Activated CD4-positive, alpha-beta memory T cell treated with anti-CD3 and anti-CD28 coated beads for 36 hours (primary cell): ENCODE measurements at regions of chr3 and their contacts with region 1.

Region 1: GRCh38 chr3:101803173-101803782 is 24.3 kb downstream of the NXPE3 start:
- DNase-seq: peak; percentile 53
- H3K4me3 Mint-ChIP-seq: no peak overlapping the region
- H3K27ac Mint-ChIP-seq: no peak overlapping the region
- H3K4me1 Mint-ChIP-seq: peaks cover 29% of the 10 kb centered on the region
- H3K27me3 Mint-ChIP-seq: no peaks in the 10 kb centered on the region

Region 2: DNA sequence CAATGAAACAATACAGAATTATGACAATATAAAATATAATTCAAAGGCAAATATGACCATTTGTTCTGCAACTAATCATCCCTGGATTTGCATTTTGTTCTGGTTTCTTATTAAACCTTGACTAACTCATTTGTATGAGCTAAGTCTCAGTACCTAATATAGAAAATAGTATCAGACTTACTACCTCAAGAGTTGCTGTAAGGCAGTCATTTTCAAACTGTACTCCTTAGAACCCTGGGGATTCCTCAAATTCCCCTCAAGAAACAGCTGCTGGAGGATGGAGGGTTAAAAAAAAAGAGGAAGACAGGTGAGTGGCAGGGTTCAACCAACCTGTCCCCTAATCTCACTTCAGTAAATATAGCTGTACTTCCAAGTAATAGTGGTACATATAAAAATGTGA is 137.4 kb before region 1 on chr3:
- CTCF ChIA-PET with region 1: no interaction called
- POLR2A ChIA-PET with region 1: no interaction called
- intact Hi-C with region 1: no loop called
- DNase-seq: no peak
- H3K4me3 Mint-ChIP-seq: no peak overlapping the region
- H3K27ac Mint-ChIP-seq: no peak overlapping the region
- H3K4me1 Mint-ChIP-seq: peaks cover 3% of the 10 kb centered on the region
- H3K27me3 Mint-ChIP-seq: no peaks in the 10 kb centered on the region

Region 3: DNA sequence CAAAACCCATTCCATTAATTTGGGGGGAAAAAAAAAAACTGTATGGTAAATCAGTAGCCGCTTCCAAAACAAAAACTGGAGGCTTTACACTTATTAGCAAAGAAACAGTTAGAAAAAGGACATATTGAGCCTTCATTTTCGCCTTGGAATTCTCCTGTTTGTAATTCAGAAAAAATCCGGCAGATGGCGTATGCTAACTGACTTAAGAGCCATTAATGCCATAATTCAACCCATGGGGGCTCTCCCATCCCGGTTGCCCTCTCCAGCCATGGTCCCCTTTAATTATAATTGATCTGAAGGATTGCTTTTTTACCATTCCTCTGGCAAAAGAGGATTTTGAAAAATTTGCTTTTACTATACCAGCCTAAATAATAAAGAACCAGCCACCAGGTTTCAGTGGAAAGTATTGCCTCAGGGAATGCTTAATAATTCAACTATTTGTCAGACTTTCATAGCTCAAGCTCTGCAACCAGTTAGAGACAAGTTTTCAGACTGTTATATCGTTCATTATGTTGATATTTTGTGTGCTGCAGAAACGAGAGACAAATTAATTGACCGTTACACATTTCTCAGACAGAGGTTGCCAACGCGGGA is 107.4 kb before region 1 on chr3:
- CTCF ChIA-PET with region 1: interaction called, 7 read pairs
- POLR2A ChIA-PET with region 1: no interaction called
- intact Hi-C with region 1: loop called (anchors 1 kb)
- DNase-seq: no peak
- H3K4me3 Mint-ChIP-seq: no peak overlapping the region
- H3K27ac Mint-ChIP-seq: no peak overlapping the region
- H3K4me1 Mint-ChIP-seq: peaks cover 8% of the 10 kb centered on the region
- H3K27me3 Mint-ChIP-seq: no peaks in the 10 kb centered on the region

Region 4: DNA sequence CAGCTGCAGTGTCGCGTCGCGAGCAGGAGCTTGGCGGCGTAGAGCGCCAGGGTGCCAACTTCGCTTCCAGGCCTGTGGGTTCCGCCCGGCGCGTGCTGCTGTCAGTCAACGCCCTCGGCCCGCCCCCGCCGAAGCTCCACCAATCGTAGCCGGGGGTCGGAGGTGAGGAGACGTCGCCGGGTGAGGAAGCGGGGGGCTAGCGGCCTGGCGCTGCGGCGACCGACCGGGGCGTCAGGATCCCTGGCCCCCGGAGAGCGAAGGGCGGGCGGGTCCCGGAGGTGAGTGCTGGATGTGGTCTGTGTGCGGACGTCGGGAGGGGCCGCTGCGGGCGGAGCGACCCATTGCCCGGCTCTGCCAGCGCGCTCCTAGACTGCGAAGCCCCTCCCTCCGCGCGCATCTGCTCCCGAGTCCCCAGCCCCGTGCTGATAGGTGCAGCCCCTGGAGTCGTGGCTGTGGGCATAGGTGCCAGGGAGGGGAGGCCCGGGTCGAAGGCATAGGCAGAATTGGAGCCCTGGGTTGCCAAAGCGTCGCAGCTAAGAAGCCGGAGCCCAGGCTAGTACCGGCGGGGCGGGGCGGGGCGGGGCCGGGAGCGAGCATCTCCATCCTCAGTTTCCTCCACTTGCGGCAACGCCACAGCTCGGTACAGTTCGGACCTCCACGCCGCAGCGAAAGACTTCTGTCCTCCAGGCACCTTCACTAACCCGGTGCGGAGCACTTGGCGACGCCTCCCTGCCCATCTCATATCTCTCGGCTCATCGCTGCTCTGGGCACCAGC is 24.0 kb before region 1 on chr3 and contains the start of gene NXPE3:
- CTCF ChIA-PET with region 1: interaction called, 10 read pairs
- POLR2A ChIA-PET with region 1: no interaction called
- intact Hi-C with region 1: no loop called
- DNase-seq: peak; percentile 96
- H3K4me3 Mint-ChIP-seq: peak within 1 kb of the TSS; percentile 95
- H3K27ac Mint-ChIP-seq: peak within 1 kb of the TSS; percentile 95
- H3K4me1 Mint-ChIP-seq: peaks cover 51% of the 10 kb centered on the region
- H3K27me3 Mint-ChIP-seq: no peaks in the 10 kb centered on the region
- total RNA-seq, gene NXPE3: 18.7 to 19.8 TPM

Region 5: DNA sequence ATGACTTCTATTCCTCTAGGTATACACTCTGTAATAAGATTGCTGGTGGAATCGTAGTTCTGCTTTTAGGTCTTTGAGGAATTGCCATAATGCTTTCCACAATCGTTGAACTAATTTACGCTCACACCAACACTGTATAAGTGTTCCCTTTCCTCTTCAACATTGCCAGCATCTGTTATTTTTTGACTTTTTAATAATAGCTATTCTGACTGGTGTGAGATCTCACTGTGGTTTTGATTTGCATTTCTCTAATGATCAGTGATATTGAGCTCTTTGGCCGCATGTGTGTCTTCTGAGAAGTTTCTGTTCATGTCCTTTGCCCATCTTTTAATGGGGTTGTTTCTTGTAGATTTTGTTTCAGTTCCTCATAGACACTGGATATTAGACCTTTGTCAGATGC is 11.5 kb before region 1 on chr3:
- CTCF ChIA-PET with region 1: interaction called, 26 read pairs
- POLR2A ChIA-PET with region 1: no interaction called
- intact Hi-C with region 1: no loop called
- DNase-seq: no peak
- H3K4me3 Mint-ChIP-seq: no peak overlapping the region
- H3K27ac Mint-ChIP-seq: no peak overlapping the region
- H3K4me1 Mint-ChIP-seq: peaks cover 50% of the 10 kb centered on the region
- H3K27me3 Mint-ChIP-seq: no peaks in the 10 kb centered on the region

Region 6: DNA sequence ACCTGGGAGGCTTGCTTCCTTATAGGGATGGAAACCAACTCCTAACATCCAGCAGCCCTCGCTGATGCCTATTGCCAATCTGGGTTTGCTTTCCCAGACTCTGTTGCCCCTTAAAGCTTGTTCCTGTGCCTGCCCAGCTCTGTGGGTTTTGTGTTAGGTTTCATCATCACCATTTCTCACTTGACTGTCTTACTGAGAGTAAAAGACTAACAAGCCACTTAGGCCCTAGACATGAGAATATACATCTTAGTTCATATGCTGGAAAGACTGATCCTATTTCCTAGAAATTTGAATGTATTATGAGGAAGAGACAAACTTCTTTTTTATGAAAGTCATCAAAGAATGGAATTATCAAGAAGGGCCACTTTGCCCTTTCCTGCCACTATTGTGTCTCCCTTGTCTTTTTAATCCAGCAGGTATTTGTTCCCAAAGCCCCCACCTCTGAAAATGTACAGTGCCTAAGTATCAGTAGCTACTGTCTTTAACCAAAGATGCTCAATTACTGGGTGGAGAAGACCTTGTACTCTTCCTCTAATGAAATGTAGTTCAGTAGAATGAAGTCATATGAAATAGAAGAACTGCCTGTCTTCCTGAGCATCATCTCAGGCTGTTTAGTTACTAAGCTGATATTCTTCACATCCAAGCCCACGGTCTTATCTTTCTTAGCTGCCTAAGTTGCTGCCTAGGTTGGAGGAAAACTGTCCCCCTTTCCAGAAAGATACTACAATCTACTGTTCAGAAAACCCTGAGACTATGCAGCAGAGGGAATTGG is 571.8 kb after region 1 on chr3:
- CTCF ChIA-PET with region 1: no interaction called
- POLR2A ChIA-PET with region 1: no interaction called
- intact Hi-C with region 1: loop called (anchors 10 kb)
- DNase-seq: no peak
- H3K4me3 Mint-ChIP-seq: no peak overlapping the region
- H3K27ac Mint-ChIP-seq: no peak overlapping the region
- H3K4me1 Mint-ChIP-seq: no peaks in the 10 kb centered on the region
- H3K27me3 Mint-ChIP-seq: peaks cover 2% of the 10 kb centered on the region

Region 7: DNA sequence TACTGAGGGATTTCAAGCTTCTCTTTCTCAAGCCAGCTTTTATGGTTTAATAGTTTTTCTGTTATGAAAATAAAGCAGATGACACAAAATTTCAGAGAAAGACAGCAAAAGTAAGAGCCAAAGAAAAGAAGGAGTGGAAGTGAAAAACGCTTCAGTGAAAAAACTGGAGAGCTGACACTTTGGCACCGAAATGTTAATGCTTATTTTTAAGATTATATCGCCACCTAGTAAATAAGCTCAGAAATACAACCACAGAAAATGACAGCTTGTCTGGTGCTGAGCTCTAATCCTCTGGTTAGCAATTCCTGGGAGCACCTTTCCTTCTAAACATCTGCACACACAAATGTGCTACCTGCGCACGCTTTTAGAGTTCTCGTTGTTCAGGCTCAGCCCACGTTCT is 733.2 kb after region 1 on chr3:
- CTCF ChIA-PET with region 1: interaction called, 17 read pairs
- POLR2A ChIA-PET with region 1: no interaction called
- intact Hi-C with region 1: loop called (anchors 2 kb)
- DNase-seq: no peak
- H3K4me3 Mint-ChIP-seq: no peak overlapping the region
- H3K27ac Mint-ChIP-seq: no peak overlapping the region
- H3K4me1 Mint-ChIP-seq: peaks cover 3% of the 10 kb centered on the region
- H3K27me3 Mint-ChIP-seq: peaks cover 3% of the 10 kb centered on the region